Activated CD4-positive, alpha-beta T cell treated with anti-CD3 and anti-CD28 coated beads for 36 hours (primary cell): ENCODE measurements at regions of chr11 and their contacts with region 1.

Region 1: DNA sequence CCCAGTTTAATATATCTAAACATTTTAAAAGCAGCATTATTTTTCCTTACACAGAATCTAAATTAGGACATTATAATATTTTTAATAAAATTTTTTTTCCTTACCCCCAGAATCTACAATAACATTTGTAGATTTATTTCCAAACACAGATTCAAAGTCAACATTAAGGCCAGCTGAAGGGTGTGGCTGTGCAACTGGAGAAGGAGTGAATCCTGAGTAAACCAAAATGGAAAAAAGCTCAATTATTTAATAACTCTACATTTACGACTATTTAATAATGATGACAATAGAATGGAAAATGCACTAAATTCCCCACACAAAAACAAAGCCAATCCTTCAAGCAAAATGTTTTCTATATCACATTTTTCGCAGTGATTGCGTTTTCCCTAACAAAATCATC is 85.1 kb downstream of the PICALM start:
- DNase-seq: no peak
- ATAC-seq: no peak
- H3K4me3 Mint-ChIP-seq: no peak overlapping the region
- H3K27ac Mint-ChIP-seq: no peak overlapping the region
- H3K4me1 Mint-ChIP-seq: peaks cover 4% of the 10 kb centered on the region
- H3K27me3 Mint-ChIP-seq: no peaks in the 10 kb centered on the region

Region 2: GRCh38 chr11:86021377-86021776 is 37.6 kb after region 1 on chr11:
- CTCF ChIA-PET with region 1: interaction called, 3 read pairs
- POLR2A ChIA-PET with region 1: no interaction called
- intact Hi-C with region 1: loop called in 1 of 2 experiments (anchors 5 kb)
- DNase-seq: no peak
- ATAC-seq: peak; percentile 82
- H3K4me3 Mint-ChIP-seq: no peak overlapping the region
- H3K27ac Mint-ChIP-seq: peak overlapping the region; percentile 42
- H3K4me1 Mint-ChIP-seq: peaks cover 44% of the 10 kb centered on the region
- H3K27me3 Mint-ChIP-seq: no peaks in the 10 kb centered on the region

Region 3: DNA sequence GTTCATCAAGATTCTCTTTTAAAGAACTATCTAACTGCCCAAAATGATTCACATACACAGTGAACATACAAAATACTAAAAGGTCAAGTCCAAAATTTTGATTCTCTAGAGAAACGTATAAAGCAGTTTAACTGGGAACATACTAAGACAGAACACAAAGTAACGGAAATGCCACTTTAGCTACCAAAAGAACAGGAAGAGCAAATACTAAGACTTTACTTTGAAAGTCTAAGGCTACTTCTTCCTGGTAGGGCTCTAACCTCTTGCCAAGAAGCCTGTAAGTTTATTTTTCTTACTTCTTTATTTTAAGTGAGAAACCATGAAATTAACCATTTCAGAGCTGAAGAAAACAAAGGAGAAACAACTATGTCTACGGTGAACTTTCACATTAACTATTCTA is 79.0 kb after region 1 on chr11:
- CTCF ChIA-PET with region 1: no interaction called
- POLR2A ChIA-PET with region 1: no interaction called
- intact Hi-C with region 1: no loop called
- DNase-seq: no peak
- ATAC-seq: no peak
- H3K4me3 Mint-ChIP-seq: peak overlapping the region; percentile 58
- H3K27ac Mint-ChIP-seq: peak overlapping the region; percentile 80
- H3K4me1 Mint-ChIP-seq: peaks cover 70% of the 10 kb centered on the region
- H3K27me3 Mint-ChIP-seq: no peaks in the 10 kb centered on the region